ENCODE measurements at regions of chr5 and their contacts with region 1.

Region 1: GRCh38 chr5:137114529-137114928 is 384.6 kb downstream of the SPOCK1 start:
- DNase-seq: no peak
- H3K4me3 ChIP-seq: no peak overlapping the region
- CTCF ChIP-seq: no peak
- POLR2A ChIP-seq: no peak

Region 2: GRCh38 chr5:136712705-136713104 is 401.8 kb before region 1 on chr5:
- intact Hi-C with region 1: no loop called
- DNase-seq: no peak
- H3K4me3 ChIP-seq: no peak overlapping the region
- CTCF ChIP-seq: no peak
- POLR2A ChIP-seq: no peak

Region 3: DNA sequence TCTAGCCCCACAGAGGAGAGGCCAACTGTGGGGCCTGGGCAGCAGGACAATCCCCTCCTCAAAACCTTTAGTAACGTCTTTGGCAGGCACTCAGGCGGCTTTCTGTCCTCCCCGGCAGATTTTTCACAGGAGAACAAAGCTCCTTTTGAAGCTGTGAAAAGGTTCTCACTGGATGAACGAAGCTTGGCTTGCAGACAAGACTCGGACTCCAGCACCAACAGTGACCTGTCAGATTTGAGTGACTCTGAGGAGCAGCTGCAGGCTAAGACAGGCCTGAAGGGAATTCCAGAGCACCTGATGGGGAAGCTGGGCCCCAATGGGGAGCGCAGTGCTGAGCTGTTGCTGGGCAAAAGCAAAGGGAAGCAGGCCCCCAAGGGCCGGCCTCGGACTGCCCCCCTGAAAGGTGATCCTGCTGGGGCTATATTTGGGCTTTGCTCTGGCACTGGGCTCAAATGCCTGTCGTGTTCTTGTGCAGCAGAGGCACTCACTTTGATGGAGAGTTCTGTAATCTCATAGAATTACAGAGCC is 1277.4 kb after region 1 on chr5:
- intact Hi-C with region 1: loop called (anchors 10 kb)
- DNase-seq: no peak
- H3K4me3 ChIP-seq: no peak overlapping the region
- CTCF ChIP-seq: no peak
- POLR2A ChIP-seq: no peak

Measured in lower leg skin (tissue), 4 donors.